CD8-positive, alpha-beta memory T cell (primary cell): ENCODE measurements at regions of chr21 and their contacts with region 1.

Region 1: GRCh38 chr21:29024474-29025327 is at the start of gene USP16:
- DNase-seq: peak; percentile 89 to 97 (median 96)
- H3K4me3 ChIP-seq: peak within 1 kb of the TSS; percentile 94
- H3K4me3 Mint-ChIP-seq: peak within 1 kb of the TSS; percentile 91 to 99 (median 97)
- H3K27ac ChIP-seq: peak within 1 kb of the TSS; percentile 99
- H3K27ac Mint-ChIP-seq: peak within 1 kb of the TSS; percentile 97 to 100 (median 99)
- H3K4me1 ChIP-seq: peaks cover 54% of the 10 kb centered on the region
- H3K4me1 Mint-ChIP-seq: peaks cover 50 to 73% (median 72%) of the 10 kb centered on the region in 3 donors
- H3K27me3 ChIP-seq: no peaks in the 10 kb centered on the region
- H3K27me3 Mint-ChIP-seq: peaks cover 0 to 3% of the 10 kb centered on the region in 2 donors
- total RNA-seq, gene USP16: 55.7 to 55.9 TPM

Region 2: GRCh38 chr21:28992526-28993292 is 32.0 kb before region 1 on chr21 and contains the start of gene LTN1:
- CTCF ChIA-PET with region 1: interaction called, 8 read pairs
- POLR2A ChIA-PET with region 1: interaction called, 24 read pairs
- DNase-seq: peak; percentile 98 to 99 (median 99)
- H3K4me3 ChIP-seq: peak within 1 kb of the TSS; percentile 88
- H3K4me3 Mint-ChIP-seq: peak within 1 kb of the TSS; percentile 85 to 97 (median 95)
- H3K27ac ChIP-seq: peak within 1 kb of the TSS; percentile 91
- H3K27ac Mint-ChIP-seq: peak within 1 kb of the TSS; percentile 78 to 100 (median 98)
- H3K4me1 ChIP-seq: peaks cover 34% of the 10 kb centered on the region
- H3K4me1 Mint-ChIP-seq: peaks cover 33 to 52% (median 48%) of the 10 kb centered on the region in 3 donors
- H3K27me3 ChIP-seq: no peaks in the 10 kb centered on the region
- H3K27me3 Mint-ChIP-seq: no peaks in the 10 kb centered on the region
- total RNA-seq, gene LTN1: 22.1 to 23.2 TPM

Region 3: GRCh38 chr21:29073222-29074006 is 48.7 kb after region 1 on chr21 and contains the start of gene CCT8:
- CTCF ChIA-PET with region 1: no interaction called
- POLR2A ChIA-PET with region 1: interaction called, 32 read pairs
- DNase-seq: peak; percentile 97 to 100 (median 98)
- H3K4me3 ChIP-seq: peak within 1 kb of the TSS; percentile 93
- H3K4me3 Mint-ChIP-seq: peak within 1 kb of the TSS; percentile 96 to 100 (median 99)
- H3K27ac ChIP-seq: peak within 1 kb of the TSS; percentile 95
- H3K27ac Mint-ChIP-seq: peak within 1 kb of the TSS; percentile 96 to 100 (median 99)
- H3K4me1 ChIP-seq: peaks cover 36% of the 10 kb centered on the region
- H3K4me1 Mint-ChIP-seq: peaks cover 47 to 85% (median 79%) of the 10 kb centered on the region in 3 donors
- H3K27me3 ChIP-seq: no peaks in the 10 kb centered on the region
- H3K27me3 Mint-ChIP-seq: peaks cover 0 to 1% of the 10 kb centered on the region in 2 donors
- total RNA-seq, gene CCT8: 401 to 415 TPM